Naive thymus-derived CD4-positive, alpha-beta T cell (primary cell): ENCODE measurements at regions of chr2 and their contacts with region 1.

Region 1: GRCh38 chr2:46657042-46657504 is 177.7 kb downstream of the TMEM247 start:
- DNase-seq: peak in 5 of 9 donors; percentile 4 to 17 (median 15)
- ATAC-seq: peak; percentile 55
- H3K4me3 ChIP-seq: no peak overlapping the region
- H3K4me3 Mint-ChIP-seq: no peak overlapping the region
- H3K27ac ChIP-seq: no peak overlapping the region
- H3K27ac Mint-ChIP-seq: no peak overlapping the region
- H3K4me1 ChIP-seq: no peaks in the 10 kb centered on the region
- H3K4me1 Mint-ChIP-seq: peaks cover 0 to 2% (median 0%) of the 10 kb centered on the region in 7 donors
- H3K27me3 ChIP-seq: no peaks in the 10 kb centered on the region
- H3K27me3 Mint-ChIP-seq: peaks cover 0 to 25% (median 0%) of the 10 kb centered on the region in 5 donors

Region 2: GRCh38 chr2:46632349-46632748 is 24.7 kb before region 1 on chr2:
- CTCF ChIA-PET with region 1: no interaction called
- POLR2A ChIA-PET with region 1: no interaction called
- intact Hi-C with region 1: no loop called
- DNase-seq: peak in 2 of 9 donors; percentile 17 to 23
- ATAC-seq: no peak
- H3K4me3 ChIP-seq: no peak overlapping the region
- H3K4me3 Mint-ChIP-seq: no peak overlapping the region
- H3K27ac ChIP-seq: no peak overlapping the region
- H3K27ac Mint-ChIP-seq: no peak overlapping the region
- H3K4me1 ChIP-seq: peaks cover 0 to 7% of the 10 kb centered on the region in 2 donors
- H3K4me1 Mint-ChIP-seq: peaks cover 8 to 29% (median 10%) of the 10 kb centered on the region in 7 donors
- H3K27me3 ChIP-seq: no peaks in the 10 kb centered on the region
- H3K27me3 Mint-ChIP-seq: no peaks in the 10 kb centered on the region

Region 3: DNA sequence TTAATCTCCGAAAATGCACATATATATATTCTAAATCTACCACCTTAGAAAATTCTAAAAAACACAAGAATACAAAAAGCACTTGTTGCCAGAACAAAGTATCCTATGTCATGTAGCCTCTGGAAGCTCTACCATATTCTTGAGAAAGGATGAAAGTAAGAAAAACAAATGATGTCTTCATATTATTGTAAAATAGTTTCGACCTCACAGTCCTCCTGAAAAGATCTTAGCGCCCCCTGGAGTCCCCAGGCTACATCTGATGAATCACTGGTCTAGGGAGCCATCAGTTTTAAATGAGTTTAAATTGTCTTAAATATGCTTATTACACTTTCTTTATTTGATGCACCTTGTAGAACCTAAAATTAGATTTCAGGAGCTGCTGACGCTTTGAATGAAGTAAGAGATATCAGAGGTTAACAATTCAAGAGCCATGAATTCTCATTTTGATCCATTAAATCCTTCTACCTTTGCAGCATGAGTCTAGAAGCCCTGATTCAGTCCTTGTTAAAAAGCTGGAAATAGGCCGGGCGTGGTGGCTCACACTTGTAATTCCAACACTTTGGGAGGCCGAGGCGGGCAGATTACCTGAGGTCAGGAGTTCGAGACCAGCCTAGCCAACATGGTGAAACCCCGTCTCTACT is 119.7 kb after region 1 on chr2:
- CTCF ChIA-PET with region 1: interaction called, 11 read pairs
- POLR2A ChIA-PET with region 1: interaction called, 3 read pairs
- intact Hi-C with region 1: loop called (anchors 1 to 2 kb)
- DNase-seq: peak in 7 of 9 donors; percentile 18 to 44 (median 32)
- ATAC-seq: peak; percentile 47
- H3K4me3 ChIP-seq: no peak overlapping the region
- H3K4me3 Mint-ChIP-seq: no peak overlapping the region
- H3K27ac ChIP-seq: no peak overlapping the region
- H3K27ac Mint-ChIP-seq: no peak overlapping the region
- H3K4me1 ChIP-seq: no peaks in the 10 kb centered on the region
- H3K4me1 Mint-ChIP-seq: peaks cover 0 to 2% (median 0%) of the 10 kb centered on the region in 7 donors
- H3K27me3 ChIP-seq: no peaks in the 10 kb centered on the region
- H3K27me3 Mint-ChIP-seq: peaks cover 0 to 14% (median 8%) of the 10 kb centered on the region in 5 donors

Region 4: GRCh38 chr2:46803911-46804670 is 147.0 kb after region 1 on chr2:
- CTCF ChIA-PET with region 1: no interaction called
- POLR2A ChIA-PET with region 1: no interaction called
- intact Hi-C with region 1: no loop called
- DNase-seq: no peak
- ATAC-seq: no peak
- H3K4me3 ChIP-seq: no peak overlapping the region
- H3K4me3 Mint-ChIP-seq: no peak overlapping the region
- H3K27ac ChIP-seq: no peak overlapping the region
- H3K27ac Mint-ChIP-seq: no peak overlapping the region
- H3K4me1 ChIP-seq: no peaks in the 10 kb centered on the region
- H3K4me1 Mint-ChIP-seq: no peaks in the 10 kb centered on the region
- H3K27me3 ChIP-seq: no peaks in the 10 kb centered on the region
- H3K27me3 Mint-ChIP-seq: peaks cover 0 to 18% (median 17%) of the 10 kb centered on the region in 5 donors